Adrenal gland (tissue), 19 donors: ENCODE measurements at regions of chr1 and their contacts with region 1.

Region 1: GRCh38 chr1:151739590-151740375 is 18.5 kb downstream of the RIIAD1 start:
- DNase-seq: peak in 1 of 7 donors; percentile 40
- H3K4me3 ChIP-seq: no peak overlapping the region
- H3K27ac ChIP-seq: no peak overlapping the region
- H3K4me1 ChIP-seq: no peaks in the 10 kb centered on the region
- H3K27me3 ChIP-seq: no peaks in the 10 kb centered on the region
- CTCF ChIP-seq: no peak
- POLR2A ChIP-seq: no peak

Region 2: GRCh38 chr1:151459331-151460046 is 280.3 kb before region 1 on chr1 and contains the start of gene POGZ:
- intact Hi-C with region 1: loop called in 1 of 2 experiments (anchors 10 kb)
- DNase-seq: peak; percentile 96 to 99 (median 98)
- H3K4me3 ChIP-seq: peak within 1 kb of the TSS; percentile 26 to 88 (median 80)
- H3K27ac ChIP-seq: peak within 1 kb of the TSS; percentile 22 to 99 (median 96)
- H3K4me1 ChIP-seq: peaks cover 25 to 36% of the 10 kb centered on the region in 2 donors
- H3K27me3 ChIP-seq: no peaks in the 10 kb centered on the region
- CTCF ChIP-seq: no peak
- POLR2A ChIP-seq: peak in 1 of 2 donors; percentile 42
- total RNA-seq, gene POGZ: 24.0 to 117 (median 60.8) TPM

Region 3: DNA sequence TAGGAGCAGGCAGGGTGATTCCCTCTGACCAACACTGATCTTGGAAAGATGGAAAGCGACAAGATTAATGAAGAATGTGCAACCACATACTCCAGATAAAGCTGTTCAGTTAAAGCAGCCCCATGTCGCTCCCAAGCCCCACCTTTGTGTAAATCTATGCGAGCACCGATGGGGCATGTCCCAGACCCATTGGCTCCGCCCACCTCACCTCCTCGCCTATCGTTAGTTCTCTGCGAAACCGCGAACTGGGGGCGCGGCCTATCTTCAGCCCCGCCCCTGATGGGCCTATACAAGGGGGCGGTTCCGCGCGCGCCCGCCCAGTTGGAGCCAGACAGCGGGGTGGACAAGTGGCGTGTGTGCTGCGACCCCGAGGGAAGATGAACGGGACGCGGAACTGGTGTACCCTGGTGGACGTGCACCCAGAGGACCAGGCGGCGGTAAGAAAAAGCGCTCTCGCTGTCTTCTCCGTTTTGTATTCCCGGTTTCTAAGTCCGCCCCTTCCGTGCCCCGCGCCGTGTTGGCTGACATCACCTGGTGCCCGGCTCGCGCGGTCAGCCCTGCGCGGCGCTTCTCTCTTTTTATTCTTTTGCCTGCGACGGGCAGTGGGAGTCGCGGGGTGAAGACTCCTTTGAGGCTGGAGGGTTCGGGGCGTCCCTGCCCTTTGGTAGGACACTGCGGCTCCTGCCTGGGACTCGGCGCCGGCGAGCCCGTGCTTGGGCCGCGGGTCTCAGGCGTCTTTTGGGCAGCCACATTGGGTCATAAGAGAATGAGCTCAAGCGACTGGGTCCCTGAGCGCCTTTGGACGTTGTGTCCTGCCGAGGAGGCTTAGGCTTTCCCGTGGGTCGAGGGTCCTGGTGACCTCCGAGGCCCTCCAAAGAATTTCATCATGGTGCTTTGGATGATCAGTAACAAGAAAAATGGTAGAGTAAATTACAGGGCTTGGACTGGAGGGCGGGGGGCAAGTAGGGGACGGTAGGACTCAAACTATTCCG is 199.5 kb before region 1 on chr1 and contains the start of gene TUFT1:
- intact Hi-C with region 1: loop called (anchors 5 kb)
- DNase-seq: peak; percentile 91 to 97 (median 95)
- H3K4me3 ChIP-seq: peak within 1 kb of the TSS; percentile 5 to 89 (median 64)
- H3K27ac ChIP-seq: peak within 1 kb of the TSS; percentile 25 to 93 (median 84)
- H3K4me1 ChIP-seq: peaks cover 7 to 13% of the 10 kb centered on the region in 2 donors
- H3K27me3 ChIP-seq: no peaks in the 10 kb centered on the region
- CTCF ChIP-seq: no peak
- POLR2A ChIP-seq: peak; percentile 80 to 91
- total RNA-seq, gene TUFT1: 5.5 to 18.5 (median 9.2) TPM

Region 4: DNA sequence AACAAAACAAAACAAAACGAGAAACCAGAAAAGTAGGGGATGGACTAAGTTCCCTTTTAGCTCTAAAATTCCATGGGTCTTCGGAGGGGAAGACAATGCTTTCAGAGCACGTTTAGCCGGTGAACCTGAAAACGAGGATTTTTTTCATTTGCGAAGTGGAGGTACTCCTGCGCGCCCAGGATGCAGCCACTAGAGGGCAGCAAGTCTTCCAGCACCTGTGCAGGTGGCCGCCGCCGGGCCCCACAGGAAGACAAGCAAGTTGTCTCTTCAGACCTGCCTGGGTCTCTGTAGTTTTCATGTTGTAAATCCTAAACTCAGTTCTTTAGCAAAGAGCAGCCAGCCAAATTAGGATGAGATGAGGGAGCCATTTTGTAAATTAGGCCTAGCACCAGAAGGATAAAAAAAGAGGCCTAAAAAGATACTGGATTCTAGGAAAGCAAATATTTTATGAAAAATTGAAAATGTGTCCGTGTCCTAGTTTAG is 145.6 kb before region 1 on chr1:
- intact Hi-C with region 1: loop called (anchors 5 kb)
- DNase-seq: peak; percentile 61 to 89 (median 81)
- H3K4me3 ChIP-seq: peak overlapping the region in 1 of 4 donors; percentile 32
- H3K27ac ChIP-seq: no peak overlapping the region
- H3K4me1 ChIP-seq: peaks cover 0 to 9% of the 10 kb centered on the region in 2 donors
- H3K27me3 ChIP-seq: no peaks in the 10 kb centered on the region
- CTCF ChIP-seq: peak; percentile 72 to 92 (median 84)
- POLR2A ChIP-seq: no peak